Naive thymus-derived CD4-positive, alpha-beta T cell (primary cell): ENCODE measurements at regions of chr4 and their contacts with region 1.

Region 1: DNA sequence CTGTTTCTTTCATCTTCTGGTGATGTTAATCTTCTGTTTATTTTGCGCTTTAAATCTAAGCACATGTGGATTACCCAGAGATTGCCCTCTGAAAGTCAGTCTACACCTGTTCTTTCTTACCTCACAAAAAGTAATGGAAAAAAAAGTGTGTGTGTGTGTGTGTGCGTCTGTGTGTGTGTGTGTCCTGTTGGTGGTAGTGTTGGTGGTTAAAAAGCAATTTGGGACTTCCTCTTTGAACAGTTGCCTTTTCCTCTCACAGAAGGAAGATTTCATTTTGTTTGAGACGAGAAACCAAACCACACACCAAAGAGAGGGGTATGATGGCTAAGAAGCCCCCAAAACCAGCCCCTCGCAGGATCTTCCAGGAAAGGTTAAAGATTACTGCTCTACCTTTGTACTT is at the start of gene STAP1:
- DNase-seq: peak in 7 of 9 donors; percentile 54 to 80 (median 68)
- ATAC-seq: peak; percentile 79
- H3K4me3 ChIP-seq: peak within 1 kb of the TSS; percentile 54
- H3K4me3 Mint-ChIP-seq: peak within 1 kb of the TSS; percentile 74 to 93 (median 86)
- H3K27ac ChIP-seq: peak within 1 kb of the TSS; percentile 59
- H3K27ac Mint-ChIP-seq: peak within 1 kb of the TSS; percentile 82 to 95 (median 91)
- H3K4me1 ChIP-seq: peaks cover 3 to 12% of the 10 kb centered on the region in 2 donors
- H3K4me1 Mint-ChIP-seq: peaks cover 13 to 82% (median 52%) of the 10 kb centered on the region in 7 donors
- H3K27me3 ChIP-seq: no peaks in the 10 kb centered on the region
- H3K27me3 Mint-ChIP-seq: no peaks in the 10 kb centered on the region
- total RNA-seq, gene STAP1: 3.3 to 39.1 (median 15.0) TPM

Region 2: GRCh38 chr4:67342291-67342690 is 216.2 kb before region 1 on chr4:
- CTCF ChIA-PET with region 1: no interaction called
- POLR2A ChIA-PET with region 1: no interaction called
- intact Hi-C with region 1: no loop called
- DNase-seq: no peak
- ATAC-seq: no peak
- H3K4me3 ChIP-seq: no peak overlapping the region
- H3K4me3 Mint-ChIP-seq: no peak overlapping the region
- H3K27ac ChIP-seq: no peak overlapping the region
- H3K27ac Mint-ChIP-seq: no peak overlapping the region
- H3K4me1 ChIP-seq: no peaks in the 10 kb centered on the region
- H3K4me1 Mint-ChIP-seq: no peaks in the 10 kb centered on the region
- H3K27me3 ChIP-seq: no peaks in the 10 kb centered on the region
- H3K27me3 Mint-ChIP-seq: peaks cover 0 to 14% (median 6%) of the 10 kb centered on the region in 5 donors

Region 3: GRCh38 chr4:67535280-67535840 is 23.1 kb before region 1 on chr4:
- CTCF ChIA-PET with region 1: no interaction called
- POLR2A ChIA-PET with region 1: no interaction called
- intact Hi-C with region 1: no loop called
- DNase-seq: no peak
- ATAC-seq: no peak
- H3K4me3 ChIP-seq: no peak overlapping the region
- H3K4me3 Mint-ChIP-seq: peak overlapping the region in 2 of 10 donors; percentile 13 to 23
- H3K27ac ChIP-seq: no peak overlapping the region
- H3K27ac Mint-ChIP-seq: peak overlapping the region in 2 of 9 donors; percentile 11 to 67
- H3K4me1 ChIP-seq: no peaks in the 10 kb centered on the region
- H3K4me1 Mint-ChIP-seq: peaks cover 20 to 60% (median 49%) of the 10 kb centered on the region in 7 donors
- H3K27me3 ChIP-seq: no peaks in the 10 kb centered on the region
- H3K27me3 Mint-ChIP-seq: no peaks in the 10 kb centered on the region

Region 4: GRCh38 chr4:67575232-67575888 is 16.9 kb after region 1 on chr4:
- CTCF ChIA-PET with region 1: interaction called, 4 read pairs
- POLR2A ChIA-PET with region 1: interaction called, 6 read pairs
- intact Hi-C with region 1: loop called (anchors 1 kb)
- DNase-seq: peak in 7 of 9 donors; percentile 29 to 63 (median 42)
- ATAC-seq: peak; percentile 86
- H3K4me3 ChIP-seq: peak overlapping the region; percentile 22
- H3K4me3 Mint-ChIP-seq: peak overlapping the region; percentile 58 to 82 (median 74)
- H3K27ac ChIP-seq: peak overlapping the region; percentile 70
- H3K27ac Mint-ChIP-seq: peak overlapping the region; percentile 79 to 95 (median 90)
- H3K4me1 ChIP-seq: peaks cover 0 to 33% of the 10 kb centered on the region in 2 donors
- H3K4me1 Mint-ChIP-seq: peaks cover 36 to 85% (median 68%) of the 10 kb centered on the region in 7 donors
- H3K27me3 ChIP-seq: no peaks in the 10 kb centered on the region
- H3K27me3 Mint-ChIP-seq: no peaks in the 10 kb centered on the region

Region 5: GRCh38 chr4:67581208-67581857 is 22.8 kb after region 1 on chr4:
- CTCF ChIA-PET with region 1: interaction called, 3 read pairs
- POLR2A ChIA-PET with region 1: interaction called, 6 read pairs
- intact Hi-C with region 1: loop called (anchors 1 kb)
- DNase-seq: peak in 7 of 9 donors; percentile 61 to 77 (median 69)
- ATAC-seq: peak; percentile 95
- H3K4me3 ChIP-seq: peak overlapping the region; percentile 10
- H3K4me3 Mint-ChIP-seq: peak overlapping the region; percentile 34 to 92 (median 76)
- H3K27ac ChIP-seq: peak overlapping the region; percentile 28
- H3K27ac Mint-ChIP-seq: peak overlapping the region; percentile 55 to 93 (median 87)
- H3K4me1 ChIP-seq: peaks cover 8 to 26% of the 10 kb centered on the region in 2 donors
- H3K4me1 Mint-ChIP-seq: peaks cover 22 to 73% (median 56%) of the 10 kb centered on the region in 7 donors
- H3K27me3 ChIP-seq: no peaks in the 10 kb centered on the region
- H3K27me3 Mint-ChIP-seq: no peaks in the 10 kb centered on the region

Region 6: GRCh38 chr4:67624939-67625338 is 66.4 kb after region 1 on chr4:
- CTCF ChIA-PET with region 1: interaction called, 6 read pairs
- POLR2A ChIA-PET with region 1: interaction called, 3 read pairs
- intact Hi-C with region 1: loop called in 1 of 2 experiments (anchors 2 kb)
- DNase-seq: peak in 2 of 9 donors; percentile 6 to 8
- ATAC-seq: no peak
- H3K4me3 ChIP-seq: no peak overlapping the region
- H3K4me3 Mint-ChIP-seq: no peak overlapping the region
- H3K27ac ChIP-seq: no peak overlapping the region
- H3K27ac Mint-ChIP-seq: no peak overlapping the region
- H3K4me1 ChIP-seq: no peaks in the 10 kb centered on the region
- H3K4me1 Mint-ChIP-seq: no peaks in the 10 kb centered on the region
- H3K27me3 ChIP-seq: no peaks in the 10 kb centered on the region
- H3K27me3 Mint-ChIP-seq: no peaks in the 10 kb centered on the region

Region 7: DNA sequence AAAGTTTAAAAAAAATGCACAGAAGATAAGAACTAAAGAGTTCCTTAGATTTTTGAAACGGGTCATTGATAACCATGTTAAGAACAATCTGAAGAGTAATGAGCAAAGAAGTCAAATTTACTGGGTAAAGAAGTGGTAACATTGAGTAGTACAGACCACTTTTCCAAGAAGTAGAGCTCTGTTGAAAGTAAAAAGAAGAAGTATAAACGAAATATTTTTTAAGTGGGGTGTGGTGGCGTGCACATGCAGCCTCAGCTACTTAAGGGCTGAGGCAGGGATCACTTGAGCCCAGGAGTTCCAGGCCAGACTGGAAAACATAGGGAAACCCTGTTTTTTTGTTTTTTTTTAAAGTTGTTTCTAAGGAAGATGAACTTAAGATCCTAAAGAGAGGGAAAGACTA is 74.0 kb after region 1 on chr4:
- CTCF ChIA-PET with region 1: no interaction called
- POLR2A ChIA-PET with region 1: interaction called, 3 read pairs
- intact Hi-C with region 1: loop called in 1 of 2 experiments (anchors 2 kb)
- DNase-seq: no peak
- ATAC-seq: no peak
- H3K4me3 ChIP-seq: no peak overlapping the region
- H3K4me3 Mint-ChIP-seq: peak overlapping the region in 2 of 10 donors; percentile 49 to 93
- H3K27ac ChIP-seq: no peak overlapping the region
- H3K27ac Mint-ChIP-seq: peak overlapping the region in 2 of 9 donors; percentile 56 to 86
- H3K4me1 ChIP-seq: no peaks in the 10 kb centered on the region
- H3K4me1 Mint-ChIP-seq: peaks cover 0 to 20% (median 0%) of the 10 kb centered on the region in 7 donors
- H3K27me3 ChIP-seq: no peaks in the 10 kb centered on the region
- H3K27me3 Mint-ChIP-seq: no peaks in the 10 kb centered on the region

Region 8: DNA sequence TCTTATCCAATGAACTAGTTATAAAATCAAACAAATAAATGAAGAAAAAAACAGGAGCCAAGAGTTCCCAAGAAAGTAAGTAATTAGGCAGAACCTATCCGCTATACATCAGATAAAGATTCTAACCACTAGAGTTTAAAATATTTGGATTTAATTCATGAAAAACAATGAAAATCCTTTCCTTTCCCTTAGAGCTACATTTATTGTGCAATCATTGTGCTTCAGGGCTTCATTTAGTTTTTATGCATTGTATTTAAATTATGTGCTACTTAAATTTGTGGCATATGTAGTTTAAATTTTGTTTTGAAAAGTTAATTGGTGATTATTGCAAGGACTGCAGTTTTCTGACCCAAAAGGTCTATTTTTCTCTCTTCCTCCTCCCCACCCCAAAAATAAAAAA is 177.8 kb after region 1 on chr4:
- CTCF ChIA-PET with region 1: no interaction called
- POLR2A ChIA-PET with region 1: no interaction called
- intact Hi-C with region 1: no loop called
- DNase-seq: no peak
- ATAC-seq: no peak
- H3K4me3 ChIP-seq: no peak overlapping the region
- H3K4me3 Mint-ChIP-seq: no peak overlapping the region
- H3K27ac ChIP-seq: no peak overlapping the region
- H3K27ac Mint-ChIP-seq: no peak overlapping the region
- H3K4me1 ChIP-seq: no peaks in the 10 kb centered on the region
- H3K4me1 Mint-ChIP-seq: peaks cover 0 to 7% (median 0%) of the 10 kb centered on the region in 7 donors
- H3K27me3 ChIP-seq: no peaks in the 10 kb centered on the region
- H3K27me3 Mint-ChIP-seq: peaks cover 0 to 5% (median 0%) of the 10 kb centered on the region in 5 donors

Region 9: GRCh38 chr4:68453077-68453476 is 894.6 kb after region 1 on chr4:
- CTCF ChIA-PET with region 1: no interaction called
- POLR2A ChIA-PET with region 1: no interaction called
- intact Hi-C with region 1: no loop called
- DNase-seq: no peak
- ATAC-seq: no peak
- H3K4me3 ChIP-seq: no peak overlapping the region
- H3K4me3 Mint-ChIP-seq: no peak overlapping the region
- H3K27ac ChIP-seq: no peak overlapping the region
- H3K27ac Mint-ChIP-seq: no peak overlapping the region
- H3K4me1 ChIP-seq: no peaks in the 10 kb centered on the region
- H3K4me1 Mint-ChIP-seq: peaks cover 6 to 53% (median 30%) of the 10 kb centered on the region in 7 donors
- H3K27me3 ChIP-seq: no peaks in the 10 kb centered on the region
- H3K27me3 Mint-ChIP-seq: peaks cover 0 to 12% (median 0%) of the 10 kb centered on the region in 5 donors